HepG2 (cell line): ENCODE measurements at regions of chr13 and their contacts with region 1.

Region 1: DNA sequence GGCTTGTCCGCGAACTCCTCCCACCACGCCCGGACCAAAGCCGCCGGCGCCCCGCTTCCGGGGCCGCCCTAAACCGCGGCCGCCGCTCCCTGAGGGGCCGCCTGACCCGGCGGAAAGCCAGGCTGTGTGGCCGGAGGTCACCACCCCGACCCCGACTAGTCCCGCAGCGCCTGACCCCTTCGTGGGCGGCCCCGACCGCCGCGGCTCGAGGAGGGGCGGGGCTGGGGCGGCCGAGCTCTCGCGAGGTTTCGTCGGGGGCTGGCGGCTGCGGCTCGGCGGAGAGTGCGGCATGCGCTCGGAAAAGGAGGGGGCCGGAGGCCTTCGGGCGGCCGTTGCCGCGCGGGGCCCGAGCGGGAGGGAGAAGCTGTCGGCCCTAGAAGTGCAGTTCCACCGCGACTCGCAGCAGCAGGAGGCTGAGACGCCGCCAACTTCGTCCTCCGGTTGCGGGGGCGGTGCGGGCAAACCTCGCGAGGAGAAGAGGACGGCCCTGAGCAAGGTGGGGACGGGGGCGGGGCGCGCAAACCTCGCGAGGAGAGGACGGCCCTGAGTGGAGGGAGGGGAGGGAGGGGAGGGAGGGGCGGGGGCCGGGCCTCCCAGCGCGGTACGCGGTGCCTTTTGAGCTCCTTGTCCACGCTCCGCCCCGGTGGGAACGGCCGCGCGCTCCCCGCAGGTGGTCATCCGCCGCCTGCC is at the start of gene UPF3A:
- DNase-seq: peak; percentile 83
- ATAC-seq: peak; percentile 94
- H3K4me3 ChIP-seq: peak within 1 kb of the TSS; percentile 84 to 98 (median 90)
- H3K27ac ChIP-seq: peak within 1 kb of the TSS; percentile 99
- H3K4me1 ChIP-seq: peaks cover 45% of the 10 kb centered on the region
- H3K27me3 ChIP-seq: no peaks in the 10 kb centered on the region; a peak in 1 of 5 replicates
- CTCF ChIP-seq: no peak; the same call in 1 of the 2 replicates
- EP300 ChIP-seq: 0 out of 4 replicates have a peak, but pooled peaks of 1 of the 2 experiments have one; percentile 8
- POLR2A ChIP-seq: peak; percentile 82 to 88
- RAD21 ChIP-seq: 0 out of 2 replicates have a peak, but pooled peaks have one; percentile 27
- total RNA-seq, gene UPF3A: 50.5 and 63.8 TPM in 2 replicates

Region 2: GRCh38 chr13:113935001-113935844 is 346.3 kb before region 1 on chr13:
- CTCF ChIA-PET with region 1: no interaction called
- POLR2A ChIA-PET with region 1: no interaction called
- in situ Hi-C with region 1: no loop called
- intact Hi-C with region 1: no loop called
- DNase-seq: no peak
- ATAC-seq: peak; percentile 50
- H3K4me3 ChIP-seq: no peak overlapping the region
- H3K27ac ChIP-seq: no peak overlapping the region
- H3K4me1 ChIP-seq: peaks cover 10% of the 10 kb centered on the region
- H3K27me3 ChIP-seq: peaks cover 6 to 72% of the 10 kb centered on the region in 2 experiments
- CTCF ChIP-seq: no peak
- EP300 ChIP-seq: no peak
- POLR2A ChIP-seq: no peak
- RAD21 ChIP-seq: no peak

Region 3: DNA sequence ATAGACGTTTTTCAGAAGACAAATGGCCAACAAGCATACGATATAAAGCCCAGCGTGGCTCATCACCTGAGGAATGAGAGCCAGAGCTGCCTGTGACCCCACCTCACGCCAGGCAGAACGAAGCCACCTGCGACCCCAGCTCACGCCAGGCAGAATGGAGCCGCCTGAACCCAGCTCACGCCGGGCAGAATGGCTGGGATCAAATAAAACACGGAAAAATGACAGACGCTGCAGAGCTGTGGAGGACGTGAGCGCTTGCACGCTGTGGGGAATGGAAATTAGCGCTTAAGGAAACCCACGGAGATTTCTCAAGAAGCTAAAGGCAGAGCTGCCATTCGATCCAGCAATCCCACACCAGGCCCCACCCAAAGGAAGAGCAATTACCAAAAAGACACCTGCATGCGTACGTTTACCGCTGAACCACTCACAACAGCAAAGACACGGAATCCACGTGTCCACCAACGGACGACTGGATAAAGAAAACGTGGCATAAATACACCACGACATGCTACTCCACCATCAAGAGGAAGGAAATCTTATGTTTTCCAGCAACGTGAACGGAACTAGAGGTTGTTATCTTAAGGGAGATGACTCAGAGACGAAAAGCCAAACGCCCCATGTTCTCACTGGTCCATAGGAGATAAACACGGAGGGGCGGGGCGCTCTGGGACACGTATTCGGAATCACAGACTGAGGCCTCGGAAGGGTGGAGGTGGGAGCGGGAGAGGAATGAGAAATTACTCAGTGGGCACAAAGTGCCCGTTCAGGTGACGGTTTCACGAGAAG is 276.9 kb before region 1 on chr13:
- CTCF ChIA-PET with region 1: no interaction called
- POLR2A ChIA-PET with region 1: no interaction called
- in situ Hi-C with region 1: no loop called
- intact Hi-C with region 1: no loop called
- DNase-seq: peak; percentile 12
- ATAC-seq: no peak
- H3K4me3 ChIP-seq: no peak overlapping the region
- H3K27ac ChIP-seq: no peak overlapping the region
- H3K4me1 ChIP-seq: no peaks in the 10 kb centered on the region
- H3K27me3 ChIP-seq: peaks cover 11 to 39% of the 10 kb centered on the region in 2 experiments; a peak in 3 of 5 replicates
- CTCF ChIP-seq: no peak
- EP300 ChIP-seq: no peak
- POLR2A ChIP-seq: no peak
- RAD21 ChIP-seq: no peak

Region 4: DNA sequence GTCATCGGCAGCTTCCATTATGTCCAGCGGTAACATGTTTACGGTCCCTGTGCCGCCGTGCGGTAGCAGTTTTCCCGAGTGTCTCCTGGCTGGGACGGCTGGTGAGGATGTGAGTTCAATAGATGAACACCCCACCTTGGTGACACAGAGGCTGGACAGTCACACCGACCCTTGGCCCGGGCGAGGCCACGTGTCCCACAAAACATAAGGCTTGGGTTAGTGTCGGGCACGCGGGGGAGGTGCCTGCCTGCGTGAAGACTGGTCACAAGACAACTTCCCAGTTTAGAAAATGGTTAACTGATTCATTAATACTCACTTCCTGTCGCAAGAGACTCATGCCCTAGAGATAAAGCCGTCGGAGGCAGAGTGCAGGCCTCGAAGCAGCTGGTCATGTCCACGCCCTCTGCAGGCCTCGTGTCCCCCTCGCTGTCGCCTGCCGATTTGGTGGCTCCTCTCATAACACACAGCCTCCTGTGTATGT is 166.3 kb before region 1 on chr13:
- CTCF ChIA-PET with region 1: no interaction called
- POLR2A ChIA-PET with region 1: no interaction called
- in situ Hi-C with region 1: no loop called
- intact Hi-C with region 1: no loop called
- DNase-seq: peak; percentile 33
- ATAC-seq: peak; percentile 45
- H3K4me3 ChIP-seq: no peak overlapping the region
- H3K27ac ChIP-seq: no peak overlapping the region
- H3K4me1 ChIP-seq: peaks cover 31% of the 10 kb centered on the region
- H3K27me3 ChIP-seq: peaks cover 6 to 38% of the 10 kb centered on the region in 2 experiments
- CTCF ChIP-seq: peak; percentile 39
- EP300 ChIP-seq: no peak
- POLR2A ChIP-seq: no peak
- RAD21 ChIP-seq: no peak

Region 5: GRCh38 chr13:114314074-114314912 is 32.8 kb after region 1 on chr13 and contains the start of gene CHAMP1:
- CTCF ChIA-PET with region 1: no interaction called
- POLR2A ChIA-PET with region 1: interaction called, 15 read pairs
- in situ Hi-C with region 1: no loop called
- intact Hi-C with region 1: loop called (anchors 2 kb)
- DNase-seq: peak; percentile 90
- ATAC-seq: peak; percentile 90
- H3K4me3 ChIP-seq: peak within 1 kb of the TSS; percentile 71 to 83 (median 82)
- H3K27ac ChIP-seq: peak within 1 kb of the TSS; percentile 89
- H3K4me1 ChIP-seq: peaks cover 61% of the 10 kb centered on the region
- H3K27me3 ChIP-seq: no peaks in the 10 kb centered on the region; a peak in 1 of 5 replicates
- CTCF ChIP-seq: no peak; the same call in 1 of the 2 replicates
- EP300 ChIP-seq: no peak
- POLR2A ChIP-seq: peak; percentile 91
- RAD21 ChIP-seq: peak; percentile 65
- total RNA-seq, gene CHAMP1: 9.7 and 14.6 TPM in 2 replicates